Gastrocnemius medialis (tissue), 4 donors: ENCODE measurements at regions of chr4 and their contacts with region 1.

Region 1: DNA sequence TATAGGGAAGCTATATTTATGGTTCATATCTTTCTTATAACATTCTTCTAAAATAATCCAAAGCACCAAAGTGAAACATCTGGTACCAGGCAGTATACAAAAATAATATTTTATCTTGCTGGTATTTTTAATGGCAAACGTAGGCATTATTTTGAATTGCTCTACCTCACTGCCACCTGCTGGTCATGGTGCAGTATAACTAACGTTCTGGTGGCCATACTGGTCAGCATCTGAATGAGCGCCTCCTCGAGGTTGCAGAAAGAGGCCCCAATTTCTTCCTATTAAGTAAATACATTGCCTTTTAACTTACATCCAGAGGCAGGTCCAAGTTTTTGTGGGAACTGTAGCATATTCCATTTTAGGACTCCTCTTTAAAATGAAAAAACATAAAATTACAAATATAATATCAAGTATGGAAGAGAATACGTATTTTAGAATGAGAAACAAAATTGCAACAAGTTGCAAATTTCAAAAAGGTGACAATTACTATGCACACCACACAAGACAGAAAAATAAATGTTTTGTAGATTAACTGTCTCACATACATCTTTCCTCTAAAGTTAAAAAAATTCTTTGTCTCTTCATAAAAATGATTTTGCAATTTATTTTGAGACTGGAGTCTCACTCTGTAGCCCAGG is 22.9 kb upstream of the CWH43 start:
- DNase-seq: peak; percentile 32 to 40
- ATAC-seq: peak; percentile 65 to 81
- H3K4me3 ChIP-seq: no peak overlapping the region
- H3K27ac ChIP-seq: no peak overlapping the region
- H3K4me1 ChIP-seq: no peaks in the 10 kb centered on the region
- H3K27me3 ChIP-seq: no peaks in the 10 kb centered on the region
- CTCF ChIP-seq: peak; percentile 64 to 91 (median 85)
- POLR2A ChIP-seq: no peak

Region 2: GRCh38 chr4:48315728-48316630 is 647.2 kb before region 1 on chr4:
- in situ Hi-C with region 1: loop called in 1 of 4 experiments (anchors 25 kb)
- intact Hi-C with region 1: no loop called
- DNase-seq: no peak
- ATAC-seq: peak; percentile 36 to 66
- H3K4me3 ChIP-seq: no peak overlapping the region
- H3K27ac ChIP-seq: no peak overlapping the region
- H3K4me1 ChIP-seq: no peaks in the 10 kb centered on the region
- H3K27me3 ChIP-seq: no peaks in the 10 kb centered on the region
- CTCF ChIP-seq: peak; percentile 30 to 71 (median 51)
- POLR2A ChIP-seq: no peak

Region 3: GRCh38 chr4:48470570-48470969 is 492.6 kb before region 1 on chr4:
- in situ Hi-C with region 1: loop called in 1 of 4 experiments (anchors 25 kb)
- intact Hi-C with region 1: no loop called
- DNase-seq: no peak
- ATAC-seq: no peak
- H3K4me3 ChIP-seq: no peak overlapping the region
- H3K27ac ChIP-seq: no peak overlapping the region
- H3K4me1 ChIP-seq: no peaks in the 10 kb centered on the region
- H3K27me3 ChIP-seq: no peaks in the 10 kb centered on the region
- CTCF ChIP-seq: no peak
- POLR2A ChIP-seq: no peak

Region 4: GRCh38 chr4:48565362-48566033 is 397.7 kb before region 1 on chr4:
- in situ Hi-C with region 1: loop called in 2 of 4 experiments (anchors 5 to 10 kb)
- intact Hi-C with region 1: no loop called
- DNase-seq: no peak
- ATAC-seq: no peak
- H3K4me3 ChIP-seq: no peak overlapping the region
- H3K27ac ChIP-seq: no peak overlapping the region
- H3K4me1 ChIP-seq: no peaks in the 10 kb centered on the region
- H3K27me3 ChIP-seq: no peaks in the 10 kb centered on the region
- CTCF ChIP-seq: no peak
- POLR2A ChIP-seq: no peak

Region 5: DNA sequence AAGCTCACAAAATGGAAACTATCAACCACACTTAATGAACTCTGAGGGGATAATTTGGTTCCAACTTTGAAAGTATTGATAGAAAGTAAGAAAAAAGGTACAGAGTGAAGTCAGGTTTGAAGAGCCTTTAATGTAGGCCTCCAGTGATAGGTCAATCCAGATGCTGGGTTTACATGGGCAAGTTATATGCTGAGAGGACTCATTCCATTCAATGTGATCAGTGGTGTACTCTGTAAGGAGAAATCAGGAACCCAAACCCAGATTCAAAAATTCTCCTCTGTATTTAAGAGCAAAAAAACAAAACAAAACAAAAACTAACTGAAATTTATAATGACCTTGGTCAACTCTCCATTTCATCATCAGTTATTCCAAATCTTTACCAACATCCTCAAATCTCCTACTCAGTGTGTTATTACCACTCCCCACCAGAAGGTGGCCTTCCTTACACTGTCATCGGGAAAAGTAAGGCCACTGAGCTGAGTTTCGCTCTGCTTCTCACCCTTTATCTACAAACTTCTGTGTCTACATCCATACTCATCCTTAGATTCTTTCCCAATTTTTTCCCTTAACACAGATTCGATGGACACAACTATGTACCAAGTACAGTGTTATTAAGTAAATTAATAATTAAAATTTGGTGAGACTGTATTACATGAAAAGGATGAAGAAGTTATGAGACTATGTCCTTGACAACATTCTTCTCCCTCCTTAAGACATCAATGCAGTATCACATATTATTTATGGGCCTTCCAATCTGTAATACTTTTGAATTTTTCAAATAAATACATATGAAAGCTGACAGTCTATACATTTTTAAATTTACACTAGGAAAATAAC is 384.8 kb before region 1 on chr4:
- in situ Hi-C with region 1: loop called in 2 of 4 experiments (anchors 5 kb)
- intact Hi-C with region 1: loop called (anchors 1 kb)
- DNase-seq: peak in 1 of 2 donors; percentile 34
- ATAC-seq: peak; percentile 83 to 93
- H3K4me3 ChIP-seq: no peak overlapping the region
- H3K27ac ChIP-seq: no peak overlapping the region
- H3K4me1 ChIP-seq: no peaks in the 10 kb centered on the region
- H3K27me3 ChIP-seq: no peaks in the 10 kb centered on the region
- CTCF ChIP-seq: peak; percentile 78 to 89 (median 83)
- POLR2A ChIP-seq: no peak

Region 6: DNA sequence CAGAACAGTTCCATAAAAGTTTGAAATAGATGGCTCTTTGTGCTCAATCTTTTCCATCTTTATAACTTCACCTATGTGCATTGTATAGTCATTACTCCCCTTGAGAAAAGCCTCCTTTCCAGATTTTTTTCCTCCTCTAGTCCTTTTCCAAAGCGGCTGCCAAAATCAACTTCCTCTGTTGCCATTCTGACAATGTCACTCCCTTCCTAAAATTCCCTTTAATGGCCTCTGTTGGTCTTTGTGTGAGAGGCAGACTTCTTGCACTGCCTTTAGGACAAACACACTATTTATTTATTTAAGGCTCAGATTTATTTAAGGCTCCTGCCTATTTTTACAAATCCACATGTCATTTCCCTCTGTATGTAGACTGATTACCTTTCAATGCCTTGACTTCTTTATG is 161.4 kb before region 1 on chr4:
- in situ Hi-C with region 1: no loop called
- intact Hi-C with region 1: no loop called
- DNase-seq: no peak
- ATAC-seq: peak in 1 of 2 donors; percentile 26
- H3K4me3 ChIP-seq: no peak overlapping the region
- H3K27ac ChIP-seq: peak overlapping the region; percentile 39 to 66 (median 54)
- H3K4me1 ChIP-seq: no peaks in the 10 kb centered on the region
- H3K27me3 ChIP-seq: no peaks in the 10 kb centered on the region
- CTCF ChIP-seq: no peak
- POLR2A ChIP-seq: no peak

Region 7: GRCh38 chr4:49044270-49044669 is 81.1 kb after region 1 on chr4:
- in situ Hi-C with region 1: no loop called
- intact Hi-C with region 1: no loop called
- DNase-seq: no peak
- ATAC-seq: no peak
- H3K4me3 ChIP-seq: no peak overlapping the region
- H3K27ac ChIP-seq: no peak overlapping the region
- H3K4me1 ChIP-seq: no peaks in the 10 kb centered on the region
- H3K27me3 ChIP-seq: no peaks in the 10 kb centered on the region
- CTCF ChIP-seq: no peak
- POLR2A ChIP-seq: no peak